ENCODE measurements at regions of chr2 and their contacts with region 1.

Region 1: GRCh38 chr2:102240640-102241370 is 54.0 kb downstream of the IL1RL2 start:
- DNase-seq: peak; percentile 88
- ATAC-seq: peak; percentile 96
- H3K4me3 ChIP-seq: no peak overlapping the region
- H3K27ac ChIP-seq: no peak overlapping the region
- H3K4me1 ChIP-seq: peaks cover 13% of the 10 kb centered on the region; the same call in 1 of the 2 replicates
- H3K27me3 ChIP-seq: no peaks in the 10 kb centered on the region
- CTCF ChIP-seq: peak; percentile 95 to 98 (median 97); a peak in 5 of 6 replicates
- EP300 ChIP-seq: peak; percentile 64 to 69; a peak in 3 of 4 replicates
- POLR2A ChIP-seq: no peak
- RAD21 ChIP-seq: peak; percentile 90

Region 2: GRCh38 chr2:100902833-100903405 is 1337.9 kb before region 1 on chr2:
- CTCF ChIA-PET with region 1: no interaction called
- POLR2A ChIA-PET with region 1: no interaction called
- RAD21 ChIA-PET with region 1: no interaction called
- SMC1A ChIA-PET with region 1: no interaction called
- in situ Hi-C with region 1: no loop called
- intact Hi-C with region 1: no loop called
- DNase-seq: no peak
- ATAC-seq: no peak
- H3K4me3 ChIP-seq: no peak overlapping the region
- H3K27ac ChIP-seq: no peak overlapping the region
- H3K4me1 ChIP-seq: no peaks in the 10 kb centered on the region
- H3K27me3 ChIP-seq: peaks cover 0 to 6% of the 10 kb centered on the region in 2 experiments; a peak in 2 of 4 replicates
- CTCF ChIP-seq: no peak
- EP300 ChIP-seq: no peak
- POLR2A ChIP-seq: no peak
- RAD21 ChIP-seq: no peak

Region 3: GRCh38 chr2:101419096-101419663 is 821.6 kb before region 1 on chr2:
- CTCF ChIA-PET with region 1: interaction called, 11 read pairs
- POLR2A ChIA-PET with region 1: no interaction called
- RAD21 ChIA-PET with region 1: interaction called, 3 read pairs
- SMC1A ChIA-PET with region 1: interaction called, 4 read pairs
- in situ Hi-C with region 1: no loop called
- intact Hi-C with region 1: no loop called
- DNase-seq: no peak
- ATAC-seq: peak; percentile 94
- H3K4me3 ChIP-seq: no peak overlapping the region
- H3K27ac ChIP-seq: no peak overlapping the region
- H3K4me1 ChIP-seq: no peaks in the 10 kb centered on the region
- H3K27me3 ChIP-seq: no peaks in the 10 kb centered on the region; a peak in 2 of 4 replicates
- CTCF ChIP-seq: peak; percentile 65 to 70 (median 65)
- EP300 ChIP-seq: no peak
- POLR2A ChIP-seq: no peak
- RAD21 ChIP-seq: peak; percentile 81

Region 4: DNA sequence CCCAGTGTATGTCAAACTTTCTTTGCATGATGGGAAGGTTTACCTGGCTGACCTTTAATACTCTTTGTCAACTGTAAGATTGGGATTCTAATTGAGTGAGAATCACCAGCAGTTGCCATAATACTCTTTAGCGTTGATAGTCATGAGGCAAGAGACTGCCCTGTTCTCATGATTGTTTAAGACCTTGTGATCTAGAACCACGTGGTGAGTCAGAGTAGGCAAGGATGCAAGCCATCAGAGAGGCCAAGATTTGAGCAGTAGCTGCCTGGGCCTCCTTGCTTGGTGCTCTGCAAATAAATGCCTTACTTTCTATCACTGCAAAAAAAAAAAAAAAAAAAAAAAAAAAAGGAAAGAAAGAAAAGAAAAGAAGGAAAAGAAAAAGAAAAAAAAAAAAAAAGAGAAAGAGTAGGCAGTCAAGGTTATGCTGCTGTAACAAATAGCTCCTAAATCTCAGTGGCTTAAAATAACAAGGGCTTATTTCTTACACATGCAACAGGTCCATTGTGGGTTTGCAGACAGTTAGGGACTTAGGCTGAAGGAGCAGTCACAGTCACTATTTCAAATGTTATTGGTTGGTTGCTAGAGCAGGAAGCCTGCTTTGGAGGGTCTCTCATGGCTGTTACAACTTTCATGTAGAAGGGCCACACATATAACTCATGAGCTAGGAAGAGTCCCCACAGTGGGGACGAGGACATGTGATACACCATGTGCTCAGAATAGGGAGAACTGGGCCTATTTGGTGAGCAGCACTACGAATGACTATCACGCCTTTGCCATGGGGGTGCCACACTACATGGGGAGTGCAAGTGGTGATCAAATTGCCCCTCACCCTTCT is 227.4 kb before region 1 on chr2:
- CTCF ChIA-PET with region 1: interaction called, 168 read pairs
- POLR2A ChIA-PET with region 1: interaction called, 5 read pairs
- RAD21 ChIA-PET with region 1: interaction called, 124 read pairs
- SMC1A ChIA-PET with region 1: interaction called, 119 read pairs
- in situ Hi-C with region 1: no loop called
- intact Hi-C with region 1: no loop called
- DNase-seq: no peak
- ATAC-seq: peak; percentile 49
- H3K4me3 ChIP-seq: no peak overlapping the region
- H3K27ac ChIP-seq: no peak overlapping the region
- H3K4me1 ChIP-seq: peaks cover 3% of the 10 kb centered on the region; the same call in 1 of the 2 replicates
- H3K27me3 ChIP-seq: no peaks in the 10 kb centered on the region
- CTCF ChIP-seq: no peak
- EP300 ChIP-seq: no peak
- POLR2A ChIP-seq: no peak
- RAD21 ChIP-seq: no peak

Region 5: GRCh38 chr2:102063941-102064678 is 176.7 kb before region 1 on chr2:
- CTCF ChIA-PET with region 1: interaction called, 8 read pairs
- POLR2A ChIA-PET with region 1: interaction called, 4 read pairs
- RAD21 ChIA-PET with region 1: interaction called, 42 read pairs
- SMC1A ChIA-PET with region 1: interaction called, 10 read pairs
- in situ Hi-C with region 1: no loop called
- intact Hi-C with region 1: no loop called
- DNase-seq: no peak
- ATAC-seq: peak; percentile 69
- H3K4me3 ChIP-seq: no peak overlapping the region
- H3K27ac ChIP-seq: no peak overlapping the region
- H3K4me1 ChIP-seq: no peaks in the 10 kb centered on the region; the same call in 1 of the 2 replicates
- H3K27me3 ChIP-seq: no peaks in the 10 kb centered on the region; a peak in 1 of 4 replicates
- CTCF ChIP-seq: no peak
- EP300 ChIP-seq: no peak
- POLR2A ChIP-seq: no peak
- RAD21 ChIP-seq: no peak

Region 6: GRCh38 chr2:102141011-102141943 is 99.5 kb before region 1 on chr2:
- CTCF ChIA-PET with region 1: interaction called, 12 read pairs
- POLR2A ChIA-PET with region 1: no interaction called
- RAD21 ChIA-PET with region 1: interaction called, 3 read pairs
- SMC1A ChIA-PET with region 1: interaction called, 6 read pairs
- in situ Hi-C with region 1: no loop called
- intact Hi-C with region 1: no loop called
- DNase-seq: no peak
- ATAC-seq: no peak
- H3K4me3 ChIP-seq: no peak overlapping the region
- H3K27ac ChIP-seq: no peak overlapping the region
- H3K4me1 ChIP-seq: no peaks in the 10 kb centered on the region
- H3K27me3 ChIP-seq: no peaks in the 10 kb centered on the region
- CTCF ChIP-seq: no peak
- EP300 ChIP-seq: no peak
- POLR2A ChIP-seq: no peak
- RAD21 ChIP-seq: no peak

Region 7: GRCh38 chr2:102226612-102227391 is 14.0 kb before region 1 on chr2:
- CTCF ChIA-PET with region 1: interaction called, 9 read pairs
- POLR2A ChIA-PET with region 1: no interaction called
- RAD21 ChIA-PET with region 1: interaction called, 3 read pairs
- SMC1A ChIA-PET with region 1: interaction called, 18 read pairs
- in situ Hi-C with region 1: no loop called
- intact Hi-C with region 1: no loop called
- DNase-seq: no peak
- ATAC-seq: no peak
- H3K4me3 ChIP-seq: no peak overlapping the region
- H3K27ac ChIP-seq: no peak overlapping the region
- H3K4me1 ChIP-seq: no peaks in the 10 kb centered on the region; the same call in 1 of the 2 replicates
- H3K27me3 ChIP-seq: no peaks in the 10 kb centered on the region
- CTCF ChIP-seq: no peak
- EP300 ChIP-seq: no peak
- POLR2A ChIP-seq: no peak
- RAD21 ChIP-seq: no peak

Region 8: GRCh38 chr2:102436323-102436722 is 195.5 kb after region 1 on chr2:
- CTCF ChIA-PET with region 1: interaction called, 17 read pairs
- POLR2A ChIA-PET with region 1: no interaction called
- RAD21 ChIA-PET with region 1: interaction called, 15 read pairs
- SMC1A ChIA-PET with region 1: interaction called, 4 read pairs
- in situ Hi-C with region 1: no loop called
- intact Hi-C with region 1: no loop called
- DNase-seq: no peak
- ATAC-seq: peak; percentile 49
- H3K4me3 ChIP-seq: peak overlapping the region; percentile 40; the same call in 1 of the 2 replicates
- H3K27ac ChIP-seq: peak overlapping the region; percentile 76
- H3K4me1 ChIP-seq: peaks cover 21% of the 10 kb centered on the region
- H3K27me3 ChIP-seq: no peaks in the 10 kb centered on the region
- CTCF ChIP-seq: no peak
- EP300 ChIP-seq: no peak
- POLR2A ChIP-seq: no peak
- RAD21 ChIP-seq: no peak

Measured in GM12878 (cell line).